ENCODE measurements at regions of chr1 and their contacts with region 1.

Region 1: DNA sequence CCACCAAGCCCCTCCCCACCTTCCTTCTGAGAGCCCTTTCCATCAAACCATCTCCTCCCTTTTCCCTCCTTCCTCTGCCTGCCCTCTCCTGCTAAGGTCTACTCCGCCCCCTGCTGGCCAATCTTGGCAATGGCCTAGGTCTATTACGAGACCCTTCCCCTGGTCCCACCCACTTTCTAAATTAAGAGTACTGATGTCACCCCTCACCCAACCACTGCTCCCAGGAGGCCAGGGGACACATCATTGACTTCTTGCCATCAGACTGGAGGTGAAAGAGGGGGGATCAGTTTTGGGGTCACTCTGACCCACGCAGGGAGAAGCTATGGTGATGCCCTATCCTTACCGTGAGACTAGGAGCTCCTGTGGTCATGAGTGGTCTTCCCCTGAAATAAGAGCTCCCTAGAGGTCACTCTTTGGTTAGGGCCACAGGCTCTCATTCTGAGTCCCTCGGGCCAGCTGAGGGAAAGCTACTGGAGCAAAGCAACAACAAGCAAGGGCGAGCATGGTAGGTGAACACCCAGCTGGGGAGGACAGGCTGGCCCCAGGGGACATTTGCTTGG is 34.6 kb upstream of the S100A7 start:
- DNase-seq: peak in 1 of 2 donors; percentile 90
- H3K4me3 ChIP-seq: no peak overlapping the region
- H3K27ac ChIP-seq: peak overlapping the region; percentile 55 to 58
- H3K4me1 ChIP-seq: peaks cover 17 to 37% of the 10 kb centered on the region in 2 donors
- H3K27me3 ChIP-seq: no peaks in the 10 kb centered on the region
- CTCF ChIP-seq: peak; percentile 90 to 93 (median 92)

Region 2: DNA sequence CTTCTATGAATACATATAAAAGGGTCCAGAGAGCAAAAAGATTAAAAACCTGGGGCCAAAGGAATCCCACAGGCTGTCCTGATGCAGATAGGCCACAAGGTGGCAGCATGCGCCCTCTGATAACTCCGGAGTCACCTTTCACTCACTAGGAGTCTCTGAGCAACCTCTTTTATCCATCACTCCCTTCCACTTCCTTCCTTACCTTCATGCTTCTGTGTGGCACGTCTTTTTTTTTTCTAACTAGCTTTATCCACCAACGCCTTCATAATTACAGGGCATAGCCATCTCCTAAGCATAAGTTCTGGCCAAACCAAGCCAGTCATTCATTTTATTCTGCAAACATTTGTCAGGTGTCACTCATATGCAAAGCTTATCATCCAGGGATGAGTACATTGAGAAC is 142.5 kb before region 1 on chr1:
- intact Hi-C with region 1: loop called (anchors 1 kb)
- DNase-seq: peak in 1 of 2 donors; percentile 80
- H3K4me3 ChIP-seq: no peak overlapping the region
- H3K27ac ChIP-seq: no peak overlapping the region
- H3K4me1 ChIP-seq: no peaks in the 10 kb centered on the region
- H3K27me3 ChIP-seq: no peaks in the 10 kb centered on the region
- CTCF ChIP-seq: peak; percentile 82 to 92 (median 84)

Region 3: DNA sequence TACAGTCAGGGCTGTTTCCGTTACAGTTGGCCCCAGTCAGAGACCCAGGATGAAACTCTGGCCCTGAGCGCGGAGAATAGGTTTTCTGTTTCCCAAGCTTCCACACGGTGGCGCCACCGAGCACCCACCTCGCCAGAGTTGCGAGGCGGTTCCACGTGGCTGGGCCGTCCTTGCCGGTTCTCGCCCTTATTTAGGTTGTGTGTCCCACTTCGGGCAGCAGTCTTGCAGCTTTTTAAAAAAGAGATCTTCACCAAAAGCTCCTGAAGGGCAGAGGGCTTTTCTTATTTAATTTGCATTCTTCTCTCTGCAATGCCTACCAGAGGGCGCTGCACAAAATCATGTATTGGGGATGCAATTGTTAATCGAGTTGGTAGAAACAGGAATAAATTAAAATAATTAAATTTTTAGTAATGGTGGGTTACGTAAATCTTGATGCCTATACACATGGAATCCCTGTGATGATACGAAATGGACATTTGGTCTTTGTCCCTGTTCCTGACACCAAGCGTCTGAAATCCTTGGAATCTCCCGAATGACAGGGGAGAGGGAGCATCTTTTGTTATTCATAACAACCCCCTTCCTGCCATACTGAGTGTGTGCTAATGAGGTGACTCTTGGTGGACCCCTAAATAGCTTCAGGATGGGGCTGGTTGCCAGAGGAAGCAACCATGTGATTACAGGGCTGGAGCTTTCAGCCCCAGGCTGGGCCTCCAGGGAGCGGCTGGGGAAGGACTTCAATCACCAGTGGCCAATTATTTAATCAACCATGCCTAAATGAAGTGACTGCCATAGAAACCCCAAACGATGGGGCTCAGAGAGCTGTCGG is 29.0 kb before region 1 on chr1:
- intact Hi-C with region 1: loop called (anchors 1 kb)
- DNase-seq: peak in 1 of 2 donors; percentile 67
- H3K4me3 ChIP-seq: no peak overlapping the region
- H3K27ac ChIP-seq: peak overlapping the region in 1 of 2 donors; percentile 1
- H3K4me1 ChIP-seq: peaks cover 0 to 9% of the 10 kb centered on the region in 2 donors
- H3K27me3 ChIP-seq: no peaks in the 10 kb centered on the region
- CTCF ChIP-seq: peak; percentile 65 to 77 (median 70)